ENCODE measurements at regions of chr16 and their contacts with region 1.

Region 1: DNA sequence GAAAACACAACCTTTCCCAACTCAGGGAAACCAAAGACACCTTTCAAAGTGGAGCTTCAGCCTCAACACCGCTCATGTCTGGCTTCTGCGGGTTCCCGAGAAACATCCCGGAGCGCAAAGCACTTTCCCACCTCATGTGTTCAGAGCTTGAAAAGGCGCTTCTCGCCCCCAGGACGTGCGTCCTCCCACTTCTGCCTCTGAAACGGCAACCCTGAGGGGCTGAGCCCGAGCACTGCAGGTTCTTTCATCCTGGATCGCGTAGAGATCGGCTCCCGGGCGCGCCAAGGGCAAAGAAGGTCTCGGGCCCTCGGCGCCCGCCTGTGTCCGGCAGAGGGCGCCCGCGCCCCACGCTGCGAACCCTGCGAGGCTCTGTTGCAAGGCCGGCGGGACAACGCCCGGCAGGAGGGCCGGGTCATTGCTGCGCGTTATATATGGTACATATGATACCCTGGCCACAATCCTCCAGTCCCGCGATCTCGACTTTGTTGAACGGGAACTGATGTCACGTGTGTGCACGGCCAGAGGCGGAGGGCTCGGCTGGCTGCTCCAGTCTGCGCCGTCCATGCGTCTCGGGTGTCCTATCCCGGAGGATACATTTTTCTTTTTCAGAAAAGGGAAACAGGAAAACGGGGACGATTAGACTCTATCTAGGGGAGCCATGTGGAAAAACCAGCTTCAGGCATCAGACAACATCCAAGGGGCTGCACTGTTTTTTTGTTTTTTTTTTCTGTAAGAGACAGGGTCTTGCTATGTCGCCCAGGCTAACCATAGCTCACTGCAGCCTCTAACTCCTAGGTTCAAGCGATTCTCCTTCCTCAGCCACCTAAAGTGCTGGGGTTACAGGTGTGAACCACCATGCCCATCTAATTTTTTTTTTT is 19.1 kb downstream of the COQ7 start:
- DNase-seq: peak; percentile 63 to 94 (median 85)

Region 2: DNA sequence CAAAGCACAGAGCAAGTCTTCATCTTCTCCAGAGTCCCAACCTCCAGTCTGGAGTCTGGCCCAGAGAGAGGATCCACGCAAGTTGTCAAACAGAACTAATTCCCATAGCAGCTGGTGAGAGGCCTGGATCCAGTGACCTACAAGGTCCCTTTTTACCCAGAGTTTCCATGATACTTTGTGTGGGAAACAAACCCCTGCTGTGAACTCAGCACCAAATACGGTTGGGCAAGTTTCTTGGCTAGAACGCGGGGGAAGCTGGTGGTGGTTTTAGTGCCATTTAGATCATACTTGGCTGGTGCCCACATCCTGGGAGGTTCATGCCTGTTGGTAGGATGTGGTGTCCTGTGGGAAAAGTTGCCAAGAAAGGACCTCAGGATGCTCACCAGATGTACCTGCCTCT is 84.8 kb before region 1 on chr16:
- intact Hi-C with region 1: no loop called
- DNase-seq: peak in 28 of 42 donors; percentile 9 to 80 (median 42)

Region 3: DNA sequence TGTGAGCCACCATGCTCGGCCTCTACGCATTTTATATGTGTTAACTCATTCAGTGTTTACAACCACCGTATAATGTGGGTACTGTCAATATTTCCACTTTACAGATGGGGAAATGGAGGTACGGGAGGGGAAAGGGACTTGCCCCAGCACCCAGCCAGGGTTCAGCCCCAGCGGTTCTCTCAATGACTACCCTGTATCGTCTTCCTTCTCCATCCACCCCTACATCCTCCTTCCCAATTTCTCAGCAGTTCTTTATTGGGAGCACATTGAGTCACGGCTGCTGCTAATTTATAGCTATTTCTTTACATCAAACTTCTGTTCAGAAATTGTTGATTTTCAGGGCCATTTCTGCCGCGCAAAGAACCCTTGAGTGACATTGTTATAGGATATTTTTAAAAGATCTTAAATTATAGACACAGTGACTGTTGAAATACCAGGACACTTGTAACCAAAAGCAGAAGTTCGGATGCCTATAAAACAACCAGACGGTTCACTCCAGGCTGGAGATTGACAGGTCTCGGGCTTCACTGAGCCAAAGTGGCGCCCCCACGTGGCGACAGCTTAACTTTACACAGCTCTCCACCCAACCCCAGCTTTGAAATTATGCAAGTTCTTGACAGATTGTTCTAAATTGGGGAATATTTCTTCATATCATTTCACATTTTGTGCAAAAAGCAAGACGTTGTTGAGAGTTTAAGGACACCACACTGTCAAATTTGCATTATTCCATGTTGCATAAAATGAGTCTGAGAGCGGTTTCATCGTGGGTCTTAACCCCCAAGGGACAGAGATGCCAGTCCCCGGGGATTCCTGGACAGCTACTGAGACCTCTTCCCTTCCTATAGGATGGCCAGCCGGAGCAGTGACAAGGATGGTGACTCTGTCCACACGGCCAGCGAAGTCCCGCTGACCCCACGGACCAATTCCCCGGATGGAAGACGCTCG is 93.3 kb after region 1 on chr16:
- intact Hi-C with region 1: loop called (anchors 5 kb)
- DNase-seq: peak; percentile 26 to 78 (median 54)

Region 4: DNA sequence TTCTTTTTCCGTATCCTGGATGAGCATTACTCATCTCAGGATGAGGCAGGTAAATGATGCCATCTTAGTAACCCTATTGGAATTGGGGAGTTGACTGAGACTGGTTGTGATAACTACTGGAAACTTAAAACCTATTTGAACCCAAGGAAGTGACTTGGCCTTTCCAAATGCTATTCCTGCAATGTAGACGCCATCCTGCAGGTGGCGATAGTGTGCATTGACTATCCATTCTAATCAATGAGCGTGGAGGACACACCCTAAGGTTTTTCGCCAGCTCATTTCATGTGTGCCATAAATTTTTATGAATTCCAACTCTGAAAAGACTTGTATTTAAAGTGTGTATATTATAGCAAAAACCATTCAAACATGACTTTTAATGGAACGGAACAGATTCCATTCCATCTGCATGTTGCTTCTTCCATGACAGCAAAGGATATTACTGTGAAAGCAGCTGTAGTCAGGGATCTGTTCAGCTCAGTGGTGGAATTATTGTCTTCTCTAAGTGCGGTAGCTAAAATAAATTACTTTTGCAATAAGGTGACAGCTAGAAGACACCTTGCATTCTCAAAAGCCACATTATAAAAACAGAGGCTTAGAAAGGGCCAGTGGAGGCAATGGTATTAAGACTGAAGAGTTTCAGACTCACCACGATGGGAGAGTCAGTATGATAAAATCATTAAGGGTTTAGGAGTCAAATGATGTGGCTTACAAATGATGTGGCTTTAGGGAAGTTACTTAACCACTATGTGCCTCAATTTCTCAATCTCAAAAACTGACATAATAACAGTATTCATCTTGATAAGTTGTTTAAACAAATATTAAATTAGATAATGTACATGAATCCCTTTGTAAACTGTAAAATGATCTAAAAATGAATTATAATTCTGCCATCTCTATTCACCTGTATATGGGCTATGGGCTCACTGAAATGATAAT is 136.9 kb after region 1 on chr16:
- intact Hi-C with region 1: no loop called
- DNase-seq: peak in 2 of 42 donors; percentile 26 to 41

Region 5: GRCh38 chr16:19375561-19376158 is 289.1 kb after region 1 on chr16:
- intact Hi-C with region 1: loop called (anchors 5 kb)
- DNase-seq: peak in 38 of 42 donors; percentile 14 to 79 (median 52)

Region 6: GRCh38 chr16:19446300-19446846 is 359.8 kb after region 1 on chr16:
- intact Hi-C with region 1: no loop called
- DNase-seq: no peak

Region 7: GRCh38 chr16:19502395-19503131 is 416.0 kb after region 1 on chr16:
- intact Hi-C with region 1: loop called (anchors 5 kb)
- DNase-seq: peak; percentile 43 to 94 (median 84)